ENCODE measurements at regions of chr20 and their contacts with region 1.

Region 1: DNA sequence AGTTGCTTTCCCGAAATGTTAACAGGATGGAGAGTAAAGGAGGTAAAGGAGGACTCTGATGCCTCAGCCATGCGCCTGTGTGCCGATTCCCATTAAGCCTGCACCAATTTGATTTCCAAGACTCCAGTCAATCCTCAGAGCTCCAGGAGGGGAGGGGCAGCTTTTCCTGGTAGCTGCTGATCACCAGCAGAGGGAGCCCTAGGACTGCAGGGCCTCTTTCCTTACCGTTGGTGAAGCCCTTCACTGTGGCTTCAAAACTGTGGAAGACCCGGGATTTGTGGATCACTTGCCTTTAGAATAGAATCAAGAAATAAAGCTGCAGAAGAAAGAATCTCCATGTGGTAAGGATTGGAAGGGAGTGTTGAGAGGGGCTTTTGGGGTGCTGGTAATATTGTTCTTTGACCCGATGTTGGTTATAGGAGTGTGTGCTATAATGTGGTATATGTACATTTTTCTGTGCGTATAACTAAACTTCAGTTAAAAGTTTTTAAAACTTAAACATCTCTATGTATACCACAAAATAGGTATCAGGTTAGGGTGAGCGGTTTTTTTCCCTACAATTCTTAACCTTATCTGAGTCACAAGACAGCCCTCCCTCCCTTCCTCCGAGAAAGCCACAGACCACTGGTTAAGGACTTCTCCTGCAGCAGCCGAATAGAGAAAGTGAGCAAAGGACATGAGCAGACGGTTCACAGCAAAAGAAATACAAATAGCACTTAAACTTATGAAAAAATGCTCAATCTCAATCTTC is 6.9 kb upstream of the OSER1 start:
- DNase-seq: peak; percentile 72
- ATAC-seq: peak; percentile 57
- H3K4me3 ChIP-seq: no peak overlapping the region
- H3K4me3 Mint-ChIP-seq: peak overlapping the region; percentile 40
- H3K27ac ChIP-seq: no peak overlapping the region
- H3K27ac Mint-ChIP-seq: no peak overlapping the region
- H3K4me1 ChIP-seq: peaks cover 18 to 22% of the 10 kb centered on the region in 2 donors
- H3K4me1 Mint-ChIP-seq: peaks cover 34% of the 10 kb centered on the region
- H3K27me3 ChIP-seq: no peaks in the 10 kb centered on the region
- H3K27me3 Mint-ChIP-seq: no peaks in the 10 kb centered on the region
- CTCF ChIP-seq: peak; percentile 94

Region 2: DNA sequence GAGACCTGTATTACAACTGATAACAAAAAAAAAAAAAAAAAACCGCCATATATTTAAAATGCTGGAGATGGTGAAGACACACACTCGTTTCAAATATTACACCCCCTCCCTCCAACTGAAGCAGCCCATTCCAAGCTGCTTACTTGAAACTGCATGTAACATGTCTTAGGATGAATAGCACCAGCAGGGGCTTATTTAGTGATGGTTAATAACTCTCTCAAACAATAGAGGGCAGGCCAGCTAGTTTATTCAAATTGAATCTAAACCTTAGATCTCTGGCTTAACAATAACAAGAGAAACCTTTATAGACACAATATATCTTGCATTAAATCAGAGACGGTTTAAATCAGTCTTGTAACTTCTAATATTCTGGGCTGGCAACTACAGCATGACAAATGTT is 21.2 kb before region 1 on chr20:
- CTCF ChIA-PET with region 1: interaction called, 23 read pairs
- POLR2A ChIA-PET with region 1: no interaction called
- intact Hi-C with region 1: no loop called
- DNase-seq: peak; percentile 27
- ATAC-seq: no peak
- H3K4me3 ChIP-seq: no peak overlapping the region
- H3K4me3 Mint-ChIP-seq: no peak overlapping the region
- H3K27ac ChIP-seq: no peak overlapping the region
- H3K27ac Mint-ChIP-seq: no peak overlapping the region
- H3K4me1 ChIP-seq: no peaks in the 10 kb centered on the region
- H3K4me1 Mint-ChIP-seq: peaks cover 3% of the 10 kb centered on the region
- H3K27me3 ChIP-seq: no peaks in the 10 kb centered on the region
- H3K27me3 Mint-ChIP-seq: no peaks in the 10 kb centered on the region
- CTCF ChIP-seq: no peak

Region 3: DNA sequence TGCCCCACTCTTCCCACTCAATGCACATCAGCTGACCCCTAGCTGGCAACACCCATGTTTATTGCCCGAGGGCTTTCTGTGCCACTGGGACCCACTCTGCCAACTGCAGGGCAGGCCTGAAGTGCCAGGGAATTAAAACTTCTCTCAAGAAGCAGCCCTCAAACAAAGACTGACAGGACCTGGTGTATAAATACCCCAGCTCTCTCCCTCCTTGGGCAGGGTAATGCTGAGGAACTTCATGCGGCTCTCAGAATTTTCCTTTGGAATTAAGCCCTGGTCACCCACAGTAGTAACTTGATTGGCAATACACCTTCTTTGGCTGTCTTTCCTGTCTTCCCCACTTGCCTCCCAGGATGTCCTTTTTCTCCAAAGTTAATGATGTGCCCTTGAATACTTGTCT is 24.3 kb after region 1 on chr20:
- CTCF ChIA-PET with region 1: no interaction called
- POLR2A ChIA-PET with region 1: no interaction called
- intact Hi-C with region 1: no loop called
- DNase-seq: no peak
- ATAC-seq: no peak
- H3K4me3 ChIP-seq: no peak overlapping the region
- H3K4me3 Mint-ChIP-seq: no peak overlapping the region
- H3K27ac ChIP-seq: no peak overlapping the region
- H3K27ac Mint-ChIP-seq: no peak overlapping the region
- H3K4me1 ChIP-seq: no peaks in the 10 kb centered on the region
- H3K4me1 Mint-ChIP-seq: peaks cover 2% of the 10 kb centered on the region
- H3K27me3 ChIP-seq: peaks cover 0 to 8% (median under 1%) of the 10 kb centered on the region in 4 experiments
- H3K27me3 Mint-ChIP-seq: peaks cover 44% of the 10 kb centered on the region
- CTCF ChIP-seq: no peak

Region 4: DNA sequence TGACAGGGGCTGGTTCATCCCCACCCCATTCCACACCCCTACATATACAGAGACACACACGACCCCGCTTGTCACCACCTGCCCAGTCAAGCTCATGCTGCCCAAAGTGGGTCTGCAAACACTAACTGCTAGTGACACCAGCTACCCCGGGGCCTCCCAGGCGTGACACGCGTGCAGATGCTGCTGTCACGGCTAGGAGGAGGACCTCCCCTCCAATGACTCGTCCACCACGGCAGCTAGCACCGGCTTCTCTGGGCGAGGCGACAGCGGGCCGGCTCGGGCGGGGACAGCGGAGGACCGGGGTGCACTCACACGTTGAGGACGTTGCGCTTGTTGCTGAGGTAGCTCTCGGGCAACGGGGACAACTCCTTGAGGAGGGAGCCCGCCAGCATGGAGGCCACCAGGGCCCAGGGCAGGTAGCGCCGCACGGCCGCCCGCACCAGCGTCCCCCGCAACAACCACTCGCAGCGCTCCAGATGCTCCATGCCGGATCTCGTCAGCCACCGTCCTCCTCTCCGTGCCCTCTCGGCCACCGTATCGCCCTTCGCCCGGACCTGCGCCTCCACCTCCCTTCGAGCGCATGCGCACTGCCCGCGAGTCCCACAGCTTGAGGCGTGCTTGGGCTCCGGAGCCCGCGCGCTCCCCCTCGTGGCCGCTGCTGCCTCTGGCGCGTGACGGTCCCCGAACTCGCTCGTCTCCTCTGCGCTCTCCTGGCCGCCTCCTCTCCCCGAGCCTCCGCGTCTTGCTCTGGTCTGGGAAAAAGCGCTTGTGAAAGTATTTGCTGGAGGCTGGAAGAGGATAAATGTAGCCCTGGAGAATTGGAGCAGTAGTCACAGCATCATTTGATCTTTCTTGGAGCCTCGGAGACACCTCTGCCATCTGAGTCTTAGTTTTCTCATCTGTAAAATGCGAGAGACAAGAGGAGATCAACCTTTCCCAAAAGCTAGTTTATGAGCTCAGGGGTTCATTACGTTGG is 93.4 kb after region 1 on chr20 and contains the start of gene FITM2:
- CTCF ChIA-PET with region 1: interaction called, 216 read pairs
- POLR2A ChIA-PET with region 1: interaction called, 3 read pairs
- intact Hi-C with region 1: loop called (anchors 1 kb)
- DNase-seq: peak; percentile 98
- ATAC-seq: peak; percentile 97
- H3K4me3 ChIP-seq: peak within 1 kb of the TSS; percentile 62 to 96 (median 95)
- H3K4me3 Mint-ChIP-seq: peak within 1 kb of the TSS; percentile 95
- H3K27ac ChIP-seq: peak within 1 kb of the TSS in 1 of 2 donors; percentile 22
- H3K27ac Mint-ChIP-seq: peak within 1 kb of the TSS; percentile 96
- H3K4me1 ChIP-seq: peaks cover 10 to 16% of the 10 kb centered on the region in 2 donors
- H3K4me1 Mint-ChIP-seq: peaks cover 22% of the 10 kb centered on the region
- H3K27me3 ChIP-seq: no peaks in the 10 kb centered on the region
- H3K27me3 Mint-ChIP-seq: peaks cover 5% of the 10 kb centered on the region
- CTCF ChIP-seq: peak; percentile 97
- total RNA-seq, gene FITM2: 4.0 and 4.3 TPM in 2 replicates

Region 5: GRCh38 chr20:44521484-44522481 is 304.3 kb after region 1 on chr20 and contains the start of gene SERINC3:
- CTCF ChIA-PET with region 1: no interaction called
- POLR2A ChIA-PET with region 1: no interaction called
- intact Hi-C with region 1: loop called (anchors 1 kb)
- DNase-seq: peak; percentile 98
- ATAC-seq: peak; percentile 99
- H3K4me3 ChIP-seq: peak within 1 kb of the TSS; percentile 89 to 98 (median 95)
- H3K4me3 Mint-ChIP-seq: peak within 1 kb of the TSS; percentile 97
- H3K27ac ChIP-seq: peak within 1 kb of the TSS; percentile 94 to 95
- H3K27ac Mint-ChIP-seq: peak within 1 kb of the TSS; percentile 94
- H3K4me1 ChIP-seq: peaks cover 18 to 25% of the 10 kb centered on the region in 2 donors
- H3K4me1 Mint-ChIP-seq: peaks cover 51% of the 10 kb centered on the region
- H3K27me3 ChIP-seq: no peaks in the 10 kb centered on the region
- H3K27me3 Mint-ChIP-seq: peaks cover 1% of the 10 kb centered on the region
- CTCF ChIP-seq: no peak
- total RNA-seq, gene SERINC3: 51.6 and 56.7 TPM in 2 replicates